ENCODE measurements at regions of chr2 and their contacts with region 1.

Region 1: GRCh38 chr2:58680755-58681310 is 439.7 kb upstream of the FANCL start:
- DNase-seq: peak; percentile 3
- H3K4me3 Mint-ChIP-seq: no peak overlapping the region
- H3K27ac Mint-ChIP-seq: no peak overlapping the region
- H3K4me1 Mint-ChIP-seq: no peaks in the 10 kb centered on the region
- H3K27me3 Mint-ChIP-seq: no peaks in the 10 kb centered on the region
- CTCF ChIP-seq: peak; percentile 26

Region 2: DNA sequence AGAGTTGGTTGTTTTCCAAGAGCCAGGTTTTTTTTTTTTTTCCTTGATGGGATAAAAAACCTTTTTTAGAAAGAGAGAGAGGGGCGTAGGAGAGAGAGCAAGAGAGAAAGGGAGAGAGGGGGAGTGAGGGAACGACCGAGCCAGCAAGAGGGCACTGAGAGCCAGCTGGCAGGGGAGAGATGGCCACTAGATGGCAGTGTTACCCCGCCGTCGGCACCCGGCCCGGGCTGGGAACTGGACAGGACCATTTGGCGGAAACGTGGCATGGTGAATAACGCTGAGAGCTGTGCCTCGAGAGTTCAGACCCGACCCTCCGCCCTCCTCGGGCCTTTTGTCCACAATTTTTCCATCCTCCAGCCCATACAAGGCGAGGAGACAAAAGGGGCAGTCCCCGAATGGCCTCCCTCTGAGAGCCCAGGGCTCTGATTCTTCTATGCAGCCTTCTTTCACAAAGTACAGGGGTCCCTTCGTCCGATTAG is 921.0 kb before region 1 on chr2:
- CTCF ChIA-PET with region 1: interaction called, 10 read pairs
- POLR2A ChIA-PET with region 1: no interaction called
- intact Hi-C with region 1: loop called (anchors 5 kb)
- DNase-seq: peak; percentile 81
- H3K4me3 Mint-ChIP-seq: peak overlapping the region; percentile 57
- H3K27ac Mint-ChIP-seq: peak overlapping the region; percentile 46
- H3K4me1 Mint-ChIP-seq: peaks cover 5% of the 10 kb centered on the region
- H3K27me3 Mint-ChIP-seq: no peaks in the 10 kb centered on the region
- CTCF ChIP-seq: peak; percentile 92

Region 3: GRCh38 chr2:58571181-58571852 is 109.5 kb before region 1 on chr2:
- CTCF ChIA-PET with region 1: interaction called, 72 read pairs
- POLR2A ChIA-PET with region 1: interaction called, 6 read pairs
- intact Hi-C with region 1: loop called (anchors 1 kb)
- DNase-seq: peak; percentile 88
- H3K4me3 Mint-ChIP-seq: no peak overlapping the region
- H3K27ac Mint-ChIP-seq: peak overlapping the region; percentile 75
- H3K4me1 Mint-ChIP-seq: peaks cover 18% of the 10 kb centered on the region
- H3K27me3 Mint-ChIP-seq: no peaks in the 10 kb centered on the region
- CTCF ChIP-seq: peak; percentile 87

Region 4: GRCh38 chr2:58614226-58614625 is 66.6 kb before region 1 on chr2:
- CTCF ChIA-PET with region 1: interaction called, 5 read pairs
- POLR2A ChIA-PET with region 1: no interaction called
- intact Hi-C with region 1: loop called (anchors 1 kb)
- DNase-seq: no peak
- H3K4me3 Mint-ChIP-seq: peak overlapping the region; percentile 19
- H3K27ac Mint-ChIP-seq: peak overlapping the region; percentile 67
- H3K4me1 Mint-ChIP-seq: peaks cover 7% of the 10 kb centered on the region
- H3K27me3 Mint-ChIP-seq: no peaks in the 10 kb centered on the region
- CTCF ChIP-seq: no peak

Region 5: GRCh38 chr2:58655152-58655551 is 25.7 kb before region 1 on chr2:
- CTCF ChIA-PET with region 1: no interaction called
- POLR2A ChIA-PET with region 1: no interaction called
- intact Hi-C with region 1: no loop called
- DNase-seq: no peak
- H3K4me3 Mint-ChIP-seq: no peak overlapping the region
- H3K27ac Mint-ChIP-seq: no peak overlapping the region
- H3K4me1 Mint-ChIP-seq: peaks cover 2% of the 10 kb centered on the region
- H3K27me3 Mint-ChIP-seq: no peaks in the 10 kb centered on the region
- CTCF ChIP-seq: no peak

Region 6: GRCh38 chr2:58667137-58667774 is 13.6 kb before region 1 on chr2:
- CTCF ChIA-PET with region 1: interaction called, 12 read pairs
- POLR2A ChIA-PET with region 1: interaction called, 6 read pairs
- intact Hi-C with region 1: no loop called
- DNase-seq: no peak
- H3K4me3 Mint-ChIP-seq: no peak overlapping the region
- H3K27ac Mint-ChIP-seq: no peak overlapping the region
- H3K4me1 Mint-ChIP-seq: no peaks in the 10 kb centered on the region
- H3K27me3 Mint-ChIP-seq: no peaks in the 10 kb centered on the region
- CTCF ChIP-seq: no peak